ENCODE measurements at regions of chr20 and their contacts with region 1.

Region 1: DNA sequence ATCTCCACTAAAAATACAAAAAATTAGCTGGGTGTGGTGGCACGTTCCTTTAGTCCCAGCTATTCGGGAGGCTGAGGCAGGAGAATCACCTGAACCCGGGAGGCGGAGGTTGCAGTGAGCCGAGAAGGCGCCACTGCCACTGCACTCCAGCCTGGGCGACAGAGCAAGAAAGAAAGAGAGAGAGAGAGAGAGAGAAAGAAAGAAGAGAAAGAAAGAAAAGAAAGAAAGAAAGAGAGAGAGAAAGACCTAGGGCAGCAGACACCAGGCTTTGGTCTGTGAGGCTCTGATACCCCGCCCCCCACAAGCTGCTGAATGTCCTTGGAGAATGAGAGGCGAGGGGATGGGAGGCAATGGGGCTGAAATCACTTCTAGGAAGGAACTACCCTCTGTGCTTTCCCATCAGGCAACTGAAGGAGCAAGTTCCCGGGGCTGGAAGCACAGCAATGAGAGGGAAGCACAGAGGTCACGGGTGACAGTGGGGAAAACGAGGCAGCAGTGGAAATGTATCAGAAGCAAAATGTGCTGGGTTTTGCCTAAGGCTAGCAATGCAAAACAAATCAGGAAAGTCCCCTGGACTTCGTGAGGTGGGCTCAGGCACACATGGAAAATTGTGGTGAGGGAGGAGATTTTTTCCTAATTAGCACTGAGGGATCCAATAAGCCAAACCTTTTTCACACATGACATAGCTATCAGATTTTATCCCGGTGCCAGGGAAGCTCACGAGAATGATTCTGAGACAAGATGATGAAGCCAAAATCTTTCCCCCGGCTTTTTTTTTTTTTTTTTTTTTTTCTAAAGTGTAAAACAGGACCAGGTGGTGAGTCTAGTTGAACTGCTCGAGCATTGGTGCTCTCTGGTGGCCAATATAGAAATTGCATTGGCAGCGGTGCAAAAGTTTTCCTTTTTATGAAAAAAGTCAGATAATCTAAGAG is 16.9 kb upstream of the ARFGEF2 start:
- DNase-seq: peak; percentile 31 to 72 (median 70)
- ATAC-seq: peak; percentile 27 to 51
- H3K4me3 ChIP-seq: no peak overlapping the region
- H3K27ac ChIP-seq: no peak overlapping the region
- H3K4me1 ChIP-seq: no peaks in the 10 kb centered on the region
- H3K27me3 ChIP-seq: no peaks in the 10 kb centered on the region

Region 2: GRCh38 chr20:48482790-48483699 is 421.6 kb before region 1 on chr20:
- intact Hi-C with region 1: no loop called
- DNase-seq: no peak
- ATAC-seq: no peak
- H3K4me3 ChIP-seq: no peak overlapping the region
- H3K27ac ChIP-seq: no peak overlapping the region
- H3K4me1 ChIP-seq: no peaks in the 10 kb centered on the region
- H3K27me3 ChIP-seq: no peaks in the 10 kb centered on the region

Region 3: GRCh38 chr20:48657475-48658470 is 246.9 kb before region 1 on chr20:
- intact Hi-C with region 1: loop called (anchors 1 to 5 kb)
- DNase-seq: peak in 2 of 3 donors; percentile 54 to 85
- ATAC-seq: peak; percentile 72 to 85
- H3K4me3 ChIP-seq: no peak overlapping the region
- H3K27ac ChIP-seq: no peak overlapping the region
- H3K4me1 ChIP-seq: no peaks in the 10 kb centered on the region
- H3K27me3 ChIP-seq: no peaks in the 10 kb centered on the region

Region 4: DNA sequence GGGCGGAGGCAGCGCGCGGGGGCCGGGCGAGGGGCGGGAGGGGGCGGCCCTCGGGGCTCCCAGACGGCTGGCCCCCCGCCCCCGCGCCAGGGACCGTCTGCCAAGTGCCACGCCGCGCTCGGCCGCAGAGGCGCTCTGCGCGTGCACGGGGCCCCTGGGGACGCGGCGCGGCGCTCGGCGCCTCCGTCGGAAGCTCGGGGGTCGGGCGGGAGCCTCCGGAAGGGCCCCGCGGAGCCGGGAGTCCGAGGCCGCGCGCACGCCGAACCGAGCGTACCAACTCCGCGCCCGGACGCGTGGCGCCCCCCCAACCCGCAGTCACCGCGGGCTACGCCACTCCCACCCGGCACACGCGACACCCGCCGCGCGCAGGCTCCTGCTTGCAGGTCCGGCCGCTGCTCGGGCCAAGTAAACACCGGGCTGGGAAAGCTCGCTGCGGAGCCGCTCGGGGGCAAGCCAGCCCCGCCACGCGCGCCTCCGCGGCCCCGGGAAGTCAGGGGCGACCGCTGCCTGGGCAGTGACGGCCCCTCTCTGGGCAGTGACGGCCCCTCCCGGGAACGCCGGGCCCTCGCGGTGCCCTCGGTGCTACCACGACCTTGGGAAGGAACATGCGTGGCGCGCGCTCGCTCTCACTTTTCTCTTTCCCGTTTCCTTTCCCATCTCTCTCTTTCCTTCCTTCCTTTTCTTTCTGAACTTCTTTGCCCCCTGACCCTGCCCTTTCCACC is 76.4 kb before region 1 on chr20:
- intact Hi-C with region 1: loop called in 1 of 4 experiments (anchors 10 kb)
- DNase-seq: peak; percentile 85 to 94 (median 94)
- ATAC-seq: peak; percentile 75 to 76
- H3K4me3 ChIP-seq: peak overlapping the region; percentile 61
- H3K27ac ChIP-seq: peak overlapping the region; percentile 23
- H3K4me1 ChIP-seq: peaks cover 12% of the 10 kb centered on the region
- H3K27me3 ChIP-seq: no peaks in the 10 kb centered on the region